Activated naive CD4-positive, alpha-beta T cell treated with anti-CD3 and anti-CD28 coated beads for 36 hours (primary cell): ENCODE measurements at regions of chr7 and their contacts with region 1.

Region 1: GRCh38 chr7:142838461-142839213 is 16.2 kb upstream of the EPHB6 start:
- DNase-seq: no peak
- H3K4me3 Mint-ChIP-seq: no peak overlapping the region
- H3K27ac Mint-ChIP-seq: no peak overlapping the region
- H3K4me1 Mint-ChIP-seq: peaks cover 22% of the 10 kb centered on the region
- H3K27me3 Mint-ChIP-seq: no peaks in the 10 kb centered on the region

Region 2: GRCh38 chr7:142469696-142470543 is 368.7 kb before region 1 on chr7:
- CTCF ChIA-PET with region 1: no interaction called
- intact Hi-C with region 1: no loop called
- DNase-seq: no peak
- H3K4me3 Mint-ChIP-seq: peak overlapping the region; percentile 23
- H3K27ac Mint-ChIP-seq: no peak overlapping the region
- H3K4me1 Mint-ChIP-seq: peaks cover 58% of the 10 kb centered on the region
- H3K27me3 Mint-ChIP-seq: no peaks in the 10 kb centered on the region

Region 3: DNA sequence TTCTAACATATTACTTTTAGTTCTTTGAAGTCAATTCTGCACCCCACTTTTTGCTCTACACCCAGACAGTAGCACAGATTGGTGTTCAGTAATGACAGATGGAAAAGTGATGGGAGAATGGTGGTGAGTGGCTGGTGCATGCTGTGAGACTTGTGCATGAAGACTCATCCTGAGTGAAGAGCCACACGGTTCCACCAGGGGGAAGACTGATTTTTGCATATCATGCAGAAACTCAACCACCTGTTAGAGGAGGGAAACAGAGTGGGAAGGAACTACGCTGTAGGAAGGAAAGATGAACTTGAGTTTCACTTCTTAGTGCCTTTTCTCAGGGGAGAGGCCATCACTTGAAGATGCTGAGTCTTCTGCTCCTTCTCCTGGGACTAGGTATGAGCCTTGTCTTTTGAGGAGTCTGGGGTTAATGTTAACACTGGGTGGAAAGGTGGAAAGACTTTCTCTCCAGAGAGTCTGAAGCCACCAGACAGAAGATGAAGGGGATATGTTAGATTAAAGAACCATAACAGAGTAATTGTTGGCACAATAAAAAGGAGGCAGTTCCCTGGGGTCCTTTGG is 98.6 kb before region 1 on chr7:
- CTCF ChIA-PET with region 1: no interaction called
- intact Hi-C with region 1: no loop called
- DNase-seq: no peak
- H3K4me3 Mint-ChIP-seq: peak overlapping the region; percentile 36
- H3K27ac Mint-ChIP-seq: peak overlapping the region; percentile 41
- H3K4me1 Mint-ChIP-seq: peaks cover 7% of the 10 kb centered on the region
- H3K27me3 Mint-ChIP-seq: no peaks in the 10 kb centered on the region

Region 4: GRCh38 chr7:142776206-142776844 is 62.3 kb before region 1 on chr7:
- CTCF ChIA-PET with region 1: no interaction called
- intact Hi-C with region 1: no loop called
- DNase-seq: no peak
- H3K4me3 Mint-ChIP-seq: no peak overlapping the region
- H3K27ac Mint-ChIP-seq: no peak overlapping the region
- H3K4me1 Mint-ChIP-seq: peaks cover 1% of the 10 kb centered on the region
- H3K27me3 Mint-ChIP-seq: no peaks in the 10 kb centered on the region

Region 5: GRCh38 chr7:142827951-142828500 is 10.6 kb before region 1 on chr7:
- CTCF ChIA-PET with region 1: interaction called, 3 read pairs
- intact Hi-C with region 1: loop called (anchors 2 kb)
- DNase-seq: no peak
- H3K4me3 Mint-ChIP-seq: no peak overlapping the region
- H3K27ac Mint-ChIP-seq: no peak overlapping the region
- H3K4me1 Mint-ChIP-seq: peaks cover 25% of the 10 kb centered on the region
- H3K27me3 Mint-ChIP-seq: no peaks in the 10 kb centered on the region